Activated CD4-positive, alpha-beta memory T cell treated with anti-CD3 and anti-CD28 coated beads for 36 hours (primary cell): ENCODE measurements at regions of chr15 and their contacts with region 1.

Region 1: GRCh38 chr15:73114064-73114463 is 61.8 kb downstream of the NEO1 start:
- DNase-seq: no peak
- H3K4me3 Mint-ChIP-seq: no peak overlapping the region
- H3K27ac Mint-ChIP-seq: no peak overlapping the region
- H3K4me1 Mint-ChIP-seq: no peaks in the 10 kb centered on the region
- H3K27me3 Mint-ChIP-seq: no peaks in the 10 kb centered on the region

Region 2: DNA sequence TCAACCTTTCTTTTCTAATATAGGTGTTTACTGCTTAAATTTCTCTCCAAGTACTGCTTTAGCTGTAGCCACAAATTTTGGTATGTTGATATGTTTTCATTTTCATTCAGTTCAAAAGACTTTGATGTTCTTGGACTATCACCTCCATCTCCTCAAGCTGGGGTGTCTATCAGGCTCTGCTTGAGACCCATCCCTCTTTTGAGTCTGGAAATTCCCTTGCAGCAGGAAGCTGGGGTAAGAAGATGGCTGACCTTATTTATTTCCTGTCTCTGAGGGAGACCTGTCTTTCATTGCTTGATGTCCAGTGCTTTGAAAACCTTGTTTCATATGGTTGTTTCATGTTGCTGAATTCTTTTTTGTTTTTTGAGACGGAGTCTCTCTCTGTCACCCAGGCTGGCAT is 270.0 kb before region 1 on chr15:
- CTCF ChIA-PET with region 1: no interaction called
- POLR2A ChIA-PET with region 1: no interaction called
- intact Hi-C with region 1: no loop called
- DNase-seq: no peak
- H3K4me3 Mint-ChIP-seq: no peak overlapping the region
- H3K27ac Mint-ChIP-seq: no peak overlapping the region
- H3K4me1 Mint-ChIP-seq: peaks cover 4% of the 10 kb centered on the region
- H3K27me3 Mint-ChIP-seq: peaks cover 22% of the 10 kb centered on the region

Region 3: GRCh38 chr15:73127301-73127936 is 13.4 kb after region 1 on chr15:
- CTCF ChIA-PET with region 1: interaction called, 12 read pairs
- POLR2A ChIA-PET with region 1: no interaction called
- intact Hi-C with region 1: no loop called
- DNase-seq: peak; percentile 40
- H3K4me3 Mint-ChIP-seq: no peak overlapping the region
- H3K27ac Mint-ChIP-seq: no peak overlapping the region
- H3K4me1 Mint-ChIP-seq: peaks cover 2% of the 10 kb centered on the region
- H3K27me3 Mint-ChIP-seq: peaks cover 1% of the 10 kb centered on the region